WTC11 (cell line): ENCODE measurements at regions of chr17 and their contacts with region 1.

Region 1: GRCh38 chr17:67475236-67475937 is 98.3 kb downstream of the PITPNC1 start:
- DNase-seq: peak; percentile 78
- ATAC-seq: peak; percentile 79
- H3K4me3 Mint-ChIP-seq: no peak overlapping the region
- H3K27ac Mint-ChIP-seq: peak overlapping the region; percentile 59
- H3K4me1 Mint-ChIP-seq: peaks cover 44% of the 10 kb centered on the region
- H3K27me3 Mint-ChIP-seq: no peaks in the 10 kb centered on the region
- CTCF ChIP-seq: peak; percentile 48

Region 2: DNA sequence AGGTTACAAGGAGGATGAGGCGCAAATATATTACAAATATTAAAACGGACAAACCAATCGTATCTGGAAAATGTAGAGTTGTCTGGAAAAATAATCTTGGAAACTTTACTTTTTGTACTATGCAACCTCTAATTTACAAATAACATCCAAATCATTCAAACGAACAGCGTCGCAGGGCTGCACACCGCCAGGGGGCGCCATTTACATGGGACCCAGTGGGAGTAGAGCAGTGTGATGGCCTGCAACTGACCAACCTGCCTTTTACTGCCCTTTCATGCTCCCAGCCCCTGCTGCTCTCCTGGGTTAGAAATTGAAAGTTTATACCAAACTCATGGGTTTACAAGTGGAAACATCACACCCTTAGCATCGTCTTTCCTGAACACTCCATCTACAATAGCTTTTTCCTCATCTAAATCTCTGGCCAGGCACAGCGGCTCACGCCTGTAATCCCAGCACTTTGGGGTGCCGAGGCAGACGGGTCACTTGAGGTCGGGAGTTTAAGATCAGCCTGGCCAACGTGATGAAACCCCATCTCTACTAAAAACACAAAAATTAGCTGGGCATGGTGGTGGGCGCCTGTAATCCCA is 88.3 kb before region 1 on chr17:
- CTCF ChIA-PET with region 1: interaction called, 36 read pairs
- POLR2A ChIA-PET with region 1: no interaction called
- DNase-seq: peak; percentile 79
- ATAC-seq: peak; percentile 83
- H3K4me3 Mint-ChIP-seq: no peak overlapping the region
- H3K27ac Mint-ChIP-seq: 0 out of 2 replicates have a peak overlapping the region, but pooled peaks have one; percentile 53
- H3K4me1 Mint-ChIP-seq: peaks cover 29% of the 10 kb centered on the region
- H3K27me3 Mint-ChIP-seq: no peaks in the 10 kb centered on the region
- CTCF ChIP-seq: peak; percentile 98

Region 3: DNA sequence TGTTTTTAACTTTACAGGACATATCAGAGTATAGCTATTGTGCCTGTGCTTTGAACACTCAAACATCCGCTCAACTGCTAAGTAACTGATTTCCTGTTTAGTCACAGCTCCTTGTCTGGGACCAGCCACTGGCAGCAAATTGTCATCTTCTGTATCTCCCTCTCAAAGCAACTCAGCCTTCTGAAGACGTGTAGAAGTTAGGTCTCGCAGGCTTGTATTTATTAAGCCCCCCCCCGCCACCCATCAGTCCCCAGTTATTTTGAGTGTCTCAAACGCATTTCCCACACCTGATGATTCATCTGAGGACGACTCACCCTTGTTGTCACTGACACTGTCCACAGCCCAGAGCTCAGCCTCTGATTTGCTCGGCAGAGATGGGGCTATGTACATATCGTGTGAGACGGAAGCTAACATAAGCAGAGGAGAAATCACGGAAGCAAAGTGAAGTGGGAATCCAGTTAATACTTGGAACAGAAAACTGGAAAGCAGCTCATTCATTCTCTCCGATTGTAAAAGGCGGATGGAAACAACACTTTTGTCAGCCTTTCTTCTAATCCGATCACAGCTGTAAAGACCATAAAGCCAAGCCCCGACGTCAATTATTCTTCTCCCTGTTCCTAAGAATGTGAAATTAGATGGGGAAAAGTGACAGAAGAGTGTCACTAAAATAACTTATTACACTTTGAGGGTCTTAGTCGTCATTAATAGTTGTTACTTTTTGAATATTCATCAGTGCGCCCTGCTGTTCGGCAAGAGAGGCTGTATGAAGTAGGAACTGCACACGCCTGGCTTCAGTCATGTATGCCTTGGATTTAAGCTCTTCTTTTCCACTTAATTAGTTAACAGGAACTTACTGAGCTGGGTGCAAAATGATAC is 34.1 kb before region 1 on chr17:
- CTCF ChIA-PET with region 1: interaction called, 16 read pairs
- POLR2A ChIA-PET with region 1: interaction called, 4 read pairs
- DNase-seq: no peak
- ATAC-seq: no peak; the same call in 1 of the 2 replicates
- H3K4me3 Mint-ChIP-seq: no peak overlapping the region
- H3K27ac Mint-ChIP-seq: peak overlapping the region; percentile 88
- H3K4me1 Mint-ChIP-seq: peaks cover 65% of the 10 kb centered on the region
- H3K27me3 Mint-ChIP-seq: no peaks in the 10 kb centered on the region
- CTCF ChIP-seq: no peak

Region 4: GRCh38 chr17:67491009-67491680 is 15.8 kb after region 1 on chr17:
- CTCF ChIA-PET with region 1: interaction called, 15 read pairs
- POLR2A ChIA-PET with region 1: no interaction called
- DNase-seq: peak; percentile 47
- ATAC-seq: peak; percentile 72
- H3K4me3 Mint-ChIP-seq: peak overlapping the region; percentile 14; the same call in 1 of the 2 replicates
- H3K27ac Mint-ChIP-seq: peak overlapping the region; percentile 86
- H3K4me1 Mint-ChIP-seq: peaks cover 56% of the 10 kb centered on the region
- H3K27me3 Mint-ChIP-seq: no peaks in the 10 kb centered on the region
- CTCF ChIP-seq: no peak

Region 5: DNA sequence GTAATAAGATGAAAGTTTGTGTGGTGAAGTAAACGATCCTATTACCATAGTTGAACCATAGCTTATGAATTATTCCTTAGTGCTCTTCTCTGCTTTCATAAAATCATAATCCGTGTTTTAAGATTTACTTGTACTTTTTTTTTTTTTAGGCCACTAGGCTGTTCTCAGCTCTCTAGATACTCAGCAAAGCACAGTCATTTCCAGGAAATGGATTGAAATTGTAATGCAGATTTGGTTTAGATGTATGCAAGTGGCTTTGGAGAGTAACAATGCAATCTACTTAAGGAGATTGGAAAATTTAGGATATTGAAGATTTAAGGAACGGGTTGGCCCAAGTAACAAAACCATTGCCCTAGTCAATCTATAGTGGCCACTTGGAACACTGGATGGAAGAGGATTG is 26.8 kb after region 1 on chr17:
- CTCF ChIA-PET with region 1: no interaction called
- POLR2A ChIA-PET with region 1: no interaction called
- DNase-seq: no peak
- ATAC-seq: peak; percentile 43; the same call in 1 of the 2 replicates
- H3K4me3 Mint-ChIP-seq: peak overlapping the region; percentile 33
- H3K27ac Mint-ChIP-seq: peak overlapping the region; percentile 58
- H3K4me1 Mint-ChIP-seq: peaks cover 50% of the 10 kb centered on the region
- H3K27me3 Mint-ChIP-seq: no peaks in the 10 kb centered on the region; the same call in 1 of the 2 replicates
- CTCF ChIP-seq: no peak